Transverse colon (tissue), 4 donors: ENCODE measurements at regions of chr7 and their contacts with region 1.

Region 1: DNA sequence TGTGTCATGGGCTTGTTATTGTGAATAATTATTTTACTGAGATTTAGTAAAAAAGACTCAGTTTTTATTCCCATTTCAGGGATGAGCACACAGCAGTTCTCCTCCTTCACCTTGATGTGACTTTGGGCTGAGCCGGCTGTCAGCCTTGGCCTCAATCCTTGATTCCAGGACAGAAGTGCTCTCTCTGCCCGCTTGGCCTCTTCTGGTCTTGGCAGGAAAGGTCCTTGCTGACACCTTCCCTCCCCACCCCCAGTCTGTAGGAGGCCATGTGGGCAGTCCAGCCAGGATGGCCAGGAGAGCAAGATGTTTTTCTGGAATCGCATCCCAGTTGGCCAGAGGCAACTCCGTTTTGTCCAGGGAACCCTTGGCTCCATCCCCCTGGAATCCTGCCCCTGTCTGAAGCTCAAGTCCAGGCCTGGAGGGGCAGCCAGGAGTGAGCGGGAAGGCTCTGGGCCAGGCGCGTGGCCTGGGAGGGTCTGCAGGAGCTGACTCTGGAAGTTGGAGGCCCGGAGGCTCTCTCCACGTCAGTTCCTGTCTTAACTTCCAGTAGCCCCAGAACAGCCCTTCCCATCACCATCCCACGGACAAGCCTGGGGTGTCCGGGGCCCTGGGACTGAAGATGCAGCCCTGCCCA is 100.9 kb downstream of the PDGFA start:
- DNase-seq: no peak
- H3K4me3 ChIP-seq: no peak overlapping the region
- H3K27ac ChIP-seq: no peak overlapping the region
- H3K4me1 ChIP-seq: no peaks in the 10 kb centered on the region
- H3K27me3 ChIP-seq: no peaks in the 10 kb centered on the region
- CTCF ChIP-seq: no peak
- EP300 ChIP-seq: no peak
- POLR2A ChIP-seq: no peak

Region 2: GRCh38 chr7:166338-167060 is 252.3 kb before region 1 on chr7:
- in situ Hi-C with region 1: no loop called
- intact Hi-C with region 1: loop called (anchors 5 kb)
- DNase-seq: no peak
- H3K4me3 ChIP-seq: no peak overlapping the region
- H3K27ac ChIP-seq: peak overlapping the region in 3 of 4 donors; percentile 20 to 57 (median 29)
- H3K4me1 ChIP-seq: peaks cover 3 to 26% (median 13%) of the 10 kb centered on the region in 4 donors
- H3K27me3 ChIP-seq: peaks cover 15% of the 10 kb centered on the region
- CTCF ChIP-seq: no peak
- EP300 ChIP-seq: no peak
- POLR2A ChIP-seq: no peak

Region 3: DNA sequence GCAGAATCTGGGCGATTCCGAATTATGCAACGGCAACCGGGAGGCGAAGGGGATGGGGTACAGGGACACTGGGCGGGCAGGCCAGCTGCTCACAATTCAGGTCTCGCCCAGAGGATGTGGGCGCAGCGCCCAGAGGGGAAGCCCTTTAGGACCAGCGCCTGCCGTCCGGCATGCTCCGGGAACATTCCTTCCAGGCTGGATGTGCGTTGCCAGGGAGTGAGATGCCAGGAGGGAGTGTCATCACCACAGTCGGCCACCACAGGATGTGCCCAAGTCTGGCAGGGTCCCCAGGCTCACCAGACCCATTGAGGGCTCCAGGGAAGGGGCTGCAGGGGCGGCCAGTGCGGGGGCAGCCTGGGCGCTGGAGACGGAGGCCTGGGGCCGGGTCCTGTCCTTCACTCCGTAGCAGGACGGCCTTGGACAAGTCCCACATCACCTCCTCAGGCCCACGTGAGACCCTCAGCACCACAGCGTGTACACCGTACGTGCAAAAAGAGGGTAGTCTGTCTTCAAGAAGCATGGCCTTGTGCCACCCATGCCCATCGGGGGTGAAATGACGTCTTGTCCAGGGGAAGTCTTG is 64.9 kb before region 1 on chr7:
- in situ Hi-C with region 1: no loop called
- intact Hi-C with region 1: loop called (anchors 10 kb)
- DNase-seq: no peak
- H3K4me3 ChIP-seq: no peak overlapping the region
- H3K27ac ChIP-seq: no peak overlapping the region
- H3K4me1 ChIP-seq: no peaks in the 10 kb centered on the region
- H3K27me3 ChIP-seq: peaks cover under 1% of the 10 kb centered on the region
- CTCF ChIP-seq: no peak
- EP300 ChIP-seq: no peak
- POLR2A ChIP-seq: no peak